Right ventricle myocardium inferior (tissue), 1 donor: ENCODE measurements at regions of chrX and their contacts with region 1.

Region 1: GRCh38 chrX:15335135-15336022 is at the start of gene PIGA:
- DNase-seq: peak; percentile 98
- ATAC-seq: peak; percentile 99
- total RNA-seq, gene PIGA: 3.8 TPM

Region 2: DNA sequence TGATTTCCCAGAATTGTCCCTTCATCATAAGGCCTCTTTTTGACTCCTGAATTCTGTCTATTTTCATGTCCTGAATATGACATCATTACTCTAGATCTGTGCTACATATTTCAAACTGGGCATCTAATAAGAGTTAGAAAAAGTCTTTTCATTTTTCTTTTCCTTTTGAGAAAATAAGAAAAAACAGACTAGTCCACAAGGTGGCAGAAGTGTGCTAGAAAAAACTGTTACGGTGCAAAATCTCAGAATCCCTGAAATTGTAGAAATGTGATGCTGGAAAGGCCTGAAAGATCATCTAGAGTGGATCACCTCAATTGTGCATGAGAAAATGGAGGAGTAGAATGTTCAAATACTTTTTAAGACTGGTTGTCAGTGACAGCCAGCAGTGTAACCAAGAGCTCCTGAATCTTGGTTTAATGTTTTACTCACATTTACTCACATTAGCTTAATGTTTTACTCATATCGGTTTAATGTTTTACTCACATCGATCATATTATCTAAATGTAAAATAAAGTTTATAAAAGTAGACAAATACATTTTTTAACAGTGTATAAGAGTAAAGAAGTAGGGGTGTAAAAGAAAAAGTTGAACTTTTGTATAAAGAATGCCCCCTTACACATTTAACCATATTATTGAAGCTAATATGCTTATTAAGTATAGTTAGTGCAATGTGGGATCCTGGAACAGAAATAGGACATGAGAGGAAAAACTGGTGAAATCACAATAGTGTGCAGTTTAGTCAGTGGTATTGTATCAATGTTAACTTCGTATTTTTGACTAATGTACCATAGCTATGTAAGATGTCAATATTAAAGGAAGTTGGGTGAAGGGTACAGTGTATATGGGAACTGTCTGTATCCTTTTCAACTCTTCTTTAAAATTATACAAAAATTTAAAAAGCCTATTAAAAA is 35.2 kb before region 1 on chrX:
- intact Hi-C with region 1: loop called (anchors 5 kb)
- DNase-seq: no peak
- ATAC-seq: no peak

Region 3: GRCh38 chrX:15497865-15498264 is 162.5 kb after region 1 on chrX:
- intact Hi-C with region 1: no loop called
- DNase-seq: peak; percentile 57
- ATAC-seq: no peak

Region 4: GRCh38 chrX:15737190-15737589 is 401.8 kb after region 1 on chrX:
- intact Hi-C with region 1: no loop called
- DNase-seq: no peak
- ATAC-seq: no peak